Natural killer cell (primary cell): ENCODE measurements at regions of chr1 and their contacts with region 1.

Region 1: GRCh38 chr1:98053471-98054366 is 132.9 kb upstream of the DPYD start:
- DNase-seq: peak; percentile 60 to 72
- ATAC-seq: peak; percentile 93 to 95 (median 95)
- H3K4me3 ChIP-seq: peak overlapping the region; percentile 36
- H3K4me3 Mint-ChIP-seq: peak overlapping the region; percentile 84
- H3K27ac ChIP-seq: no peak overlapping the region
- H3K27ac Mint-ChIP-seq: peak overlapping the region; percentile 10 to 12
- H3K4me1 ChIP-seq: peaks cover 15% of the 10 kb centered on the region
- H3K4me1 Mint-ChIP-seq: peaks cover 14 to 29% of the 10 kb centered on the region in 2 donors
- H3K27me3 ChIP-seq: peaks cover 48% of the 10 kb centered on the region
- H3K27me3 Mint-ChIP-seq: peaks cover 56 to 82% of the 10 kb centered on the region in 2 donors
- CTCF ChIP-seq: peak; percentile 81

Region 2: GRCh38 chr1:96966536-96967138 is 1087.1 kb before region 1 on chr1:
- intact Hi-C with region 1: loop called (anchors 1 kb)
- DNase-seq: peak; percentile 49 to 81
- ATAC-seq: peak; percentile 70 to 82 (median 82)
- H3K4me3 ChIP-seq: no peak overlapping the region
- H3K4me3 Mint-ChIP-seq: no peak overlapping the region
- H3K27ac ChIP-seq: no peak overlapping the region
- H3K27ac Mint-ChIP-seq: no peak overlapping the region
- H3K4me1 ChIP-seq: no peaks in the 10 kb centered on the region
- H3K4me1 Mint-ChIP-seq: no peaks in the 10 kb centered on the region
- H3K27me3 ChIP-seq: peaks cover 3% of the 10 kb centered on the region
- H3K27me3 Mint-ChIP-seq: peaks cover 13 to 14% of the 10 kb centered on the region in 2 donors
- CTCF ChIP-seq: peak; percentile 86

Region 3: DNA sequence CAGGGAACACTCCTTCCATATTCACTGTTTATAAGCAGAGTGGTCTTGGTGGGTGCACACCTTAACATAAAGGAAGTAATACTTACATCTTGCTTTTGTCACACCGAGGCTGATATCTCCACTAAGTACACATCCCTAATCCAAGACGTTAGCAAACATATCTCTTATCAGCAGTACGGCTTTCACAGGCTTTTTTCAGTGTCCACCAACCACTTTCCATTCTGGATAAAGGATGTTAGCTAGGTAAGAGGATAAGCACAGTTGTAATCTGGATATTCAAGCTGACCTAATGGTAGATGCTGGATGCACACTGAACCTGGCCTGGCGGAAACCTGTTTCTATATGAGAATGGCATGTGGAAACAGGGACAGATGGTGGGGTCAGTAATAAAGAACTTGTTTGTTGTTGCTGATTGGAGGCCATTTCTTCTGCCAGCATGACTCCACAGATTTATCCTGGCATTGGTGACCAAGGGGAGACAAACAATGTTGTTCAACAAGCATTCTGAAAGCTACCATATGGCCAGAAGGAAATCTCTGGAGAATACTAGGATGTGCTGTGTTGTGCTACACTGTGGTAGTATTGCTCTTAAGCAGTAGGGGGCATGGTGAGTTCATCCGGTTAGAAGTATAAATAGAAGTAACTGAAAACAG is 915.7 kb before region 1 on chr1:
- intact Hi-C with region 1: loop called (anchors 1 kb)
- DNase-seq: peak in 1 of 2 donors; percentile 41
- ATAC-seq: peak; percentile 83 to 96 (median 85)
- H3K4me3 ChIP-seq: no peak overlapping the region
- H3K4me3 Mint-ChIP-seq: peak overlapping the region; percentile 52
- H3K27ac ChIP-seq: no peak overlapping the region
- H3K27ac Mint-ChIP-seq: peak overlapping the region in 1 of 2 donors; percentile 25
- H3K4me1 ChIP-seq: no peaks in the 10 kb centered on the region
- H3K4me1 Mint-ChIP-seq: peaks cover 7 to 12% of the 10 kb centered on the region in 2 donors
- H3K27me3 ChIP-seq: no peaks in the 10 kb centered on the region
- H3K27me3 Mint-ChIP-seq: no peaks in the 10 kb centered on the region
- CTCF ChIP-seq: peak; percentile 45

Region 4: DNA sequence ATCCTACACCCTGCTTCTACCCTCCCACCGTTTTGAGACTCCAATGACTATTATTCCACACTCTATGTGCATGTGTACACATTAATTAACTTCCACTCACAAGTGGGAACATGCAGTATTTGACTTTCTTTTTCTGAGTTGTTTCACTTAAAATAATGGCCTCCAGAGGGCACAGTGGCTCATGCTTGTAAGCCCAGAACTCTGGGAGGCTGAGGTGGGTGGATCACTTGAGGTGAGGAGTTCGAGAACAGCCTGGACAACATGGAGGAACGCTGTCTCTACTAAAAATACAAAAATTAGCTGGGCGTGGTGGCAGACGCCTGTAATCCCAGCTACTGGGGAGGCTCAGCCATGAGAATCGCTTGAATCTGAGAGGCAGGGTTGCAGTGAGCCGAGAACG is 867.3 kb before region 1 on chr1:
- intact Hi-C with region 1: loop called (anchors 2 kb)
- DNase-seq: peak in 1 of 2 donors; percentile 24
- ATAC-seq: no peak
- H3K4me3 ChIP-seq: no peak overlapping the region
- H3K4me3 Mint-ChIP-seq: no peak overlapping the region
- H3K27ac ChIP-seq: no peak overlapping the region
- H3K27ac Mint-ChIP-seq: no peak overlapping the region
- H3K4me1 ChIP-seq: no peaks in the 10 kb centered on the region
- H3K4me1 Mint-ChIP-seq: no peaks in the 10 kb centered on the region
- H3K27me3 ChIP-seq: no peaks in the 10 kb centered on the region
- H3K27me3 Mint-ChIP-seq: no peaks in the 10 kb centered on the region
- CTCF ChIP-seq: no peak

Region 5: DNA sequence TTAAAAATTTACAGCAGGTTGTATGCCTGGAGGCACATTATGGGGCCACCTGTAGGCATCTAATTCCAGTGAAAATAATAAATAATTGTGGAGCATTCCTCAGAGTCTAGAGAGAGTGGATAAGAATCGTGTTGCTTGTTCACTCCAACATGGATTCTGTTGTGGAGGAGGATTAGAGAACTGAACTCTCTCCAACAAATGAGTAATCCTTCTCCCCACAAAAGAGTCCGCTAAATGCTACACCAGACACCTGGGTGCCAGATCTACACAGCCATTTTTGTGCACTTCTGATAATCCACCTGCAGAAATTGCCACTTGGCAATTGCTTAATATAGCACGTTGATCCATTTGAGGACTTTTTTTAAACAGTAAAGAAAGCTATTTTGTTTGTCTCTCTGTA is 19.2 kb before region 1 on chr1:
- intact Hi-C with region 1: no loop called
- DNase-seq: no peak
- ATAC-seq: no peak
- H3K4me3 ChIP-seq: no peak overlapping the region
- H3K4me3 Mint-ChIP-seq: no peak overlapping the region
- H3K27ac ChIP-seq: no peak overlapping the region
- H3K27ac Mint-ChIP-seq: no peak overlapping the region
- H3K4me1 ChIP-seq: no peaks in the 10 kb centered on the region
- H3K4me1 Mint-ChIP-seq: no peaks in the 10 kb centered on the region
- H3K27me3 ChIP-seq: no peaks in the 10 kb centered on the region
- H3K27me3 Mint-ChIP-seq: peaks cover 6 to 13% of the 10 kb centered on the region in 2 donors
- CTCF ChIP-seq: no peak